ENCODE measurements at regions of chr4 and their contacts with region 1.

Region 1: DNA sequence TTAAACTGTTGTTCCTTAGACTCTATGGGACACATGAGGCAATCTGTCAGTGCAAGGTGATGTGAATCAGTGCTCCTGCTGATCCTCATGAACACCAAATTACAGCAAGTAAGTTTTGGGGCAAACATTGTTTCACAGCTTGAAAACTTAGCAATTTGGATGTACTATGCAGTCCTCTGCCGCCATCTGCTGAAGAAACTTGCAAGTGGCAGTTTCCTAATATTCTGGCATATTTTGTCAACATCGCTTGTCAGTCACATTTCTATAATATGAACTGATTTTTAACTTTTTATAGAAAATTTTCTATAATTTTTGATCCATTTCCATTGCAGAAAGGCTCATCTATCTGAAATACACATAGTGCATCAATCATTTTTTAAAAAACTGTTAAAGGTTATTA is 56.3 kb downstream of the ZAR1 start:
- DNase-seq: no peak
- H3K4me3 ChIP-seq: no peak overlapping the region
- H3K27ac ChIP-seq: no peak overlapping the region
- H3K4me1 ChIP-seq: no peaks in the 10 kb centered on the region
- H3K27me3 ChIP-seq: no peaks in the 10 kb centered on the region
- CTCF ChIP-seq: peak; percentile 76
- EP300 ChIP-seq: no peak
- RAD21 ChIP-seq: peak; percentile 94

Region 2: DNA sequence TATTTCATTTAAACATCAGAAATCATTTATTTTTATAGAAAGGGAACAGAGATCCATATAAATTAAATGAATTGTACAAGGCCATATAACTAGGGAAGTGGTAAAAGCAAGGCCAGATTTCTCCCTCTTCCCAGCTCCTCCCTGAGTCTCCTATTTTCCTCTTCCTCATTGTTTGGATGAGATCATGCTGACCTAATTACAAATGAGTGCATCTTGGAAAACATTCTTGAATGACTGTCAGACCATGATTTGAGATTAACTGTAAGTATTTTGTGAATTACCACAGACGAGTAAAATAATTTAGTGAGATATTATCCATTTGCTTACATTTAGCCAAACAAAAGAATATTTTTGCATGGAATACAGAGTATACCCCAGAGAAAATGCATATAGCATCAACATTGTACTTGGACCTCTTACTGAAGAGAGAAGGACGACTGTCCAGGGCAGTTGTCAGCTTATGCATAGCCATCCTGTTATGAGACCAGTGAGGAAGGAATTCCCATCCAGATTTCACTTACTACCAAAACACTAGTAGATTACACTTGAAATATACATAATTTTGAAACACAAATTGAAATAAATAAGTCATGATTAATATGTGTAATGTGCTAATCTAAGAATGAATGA is 157.7 kb before region 1 on chr4:
- CTCF ChIA-PET with region 1: interaction called, 13 read pairs
- POLR2A ChIA-PET with region 1: no interaction called
- DNase-seq: no peak
- H3K4me3 ChIP-seq: no peak overlapping the region
- H3K27ac ChIP-seq: peak overlapping the region in 1 of 2 experiments; percentile 24; a peak in 1 of 4 replicates
- H3K4me1 ChIP-seq: peaks cover 0 to 13% of the 10 kb centered on the region in 2 experiments; a peak in 2 of 4 replicates
- H3K27me3 ChIP-seq: no peaks in the 10 kb centered on the region
- CTCF ChIP-seq: no peak
- EP300 ChIP-seq: no peak
- RAD21 ChIP-seq: no peak

Region 3: DNA sequence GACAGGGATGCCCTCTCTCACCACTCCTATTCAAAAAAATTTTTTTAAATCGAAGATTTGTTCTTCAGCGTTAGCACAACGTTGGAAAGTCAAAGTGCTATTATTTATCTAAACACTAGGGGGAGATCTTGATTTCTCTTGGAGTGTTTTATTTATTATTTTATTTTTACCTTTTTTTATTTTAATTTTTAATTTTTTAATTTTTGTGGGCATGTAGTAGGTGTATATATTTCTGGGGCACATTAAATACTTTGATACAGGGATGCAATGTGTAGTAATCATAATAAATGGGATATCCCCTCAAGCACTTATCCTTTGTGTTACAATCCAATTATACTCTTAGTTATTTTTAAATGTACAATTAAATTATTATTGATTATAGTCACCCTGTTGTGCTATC is 100.6 kb before region 1 on chr4:
- CTCF ChIA-PET with region 1: interaction called, 50 read pairs
- POLR2A ChIA-PET with region 1: no interaction called
- DNase-seq: no peak
- H3K4me3 ChIP-seq: no peak overlapping the region
- H3K27ac ChIP-seq: no peak overlapping the region
- H3K4me1 ChIP-seq: no peaks in the 10 kb centered on the region
- H3K27me3 ChIP-seq: no peaks in the 10 kb centered on the region
- CTCF ChIP-seq: peak; percentile 62
- EP300 ChIP-seq: no peak
- RAD21 ChIP-seq: peak; percentile 66

Region 4: DNA sequence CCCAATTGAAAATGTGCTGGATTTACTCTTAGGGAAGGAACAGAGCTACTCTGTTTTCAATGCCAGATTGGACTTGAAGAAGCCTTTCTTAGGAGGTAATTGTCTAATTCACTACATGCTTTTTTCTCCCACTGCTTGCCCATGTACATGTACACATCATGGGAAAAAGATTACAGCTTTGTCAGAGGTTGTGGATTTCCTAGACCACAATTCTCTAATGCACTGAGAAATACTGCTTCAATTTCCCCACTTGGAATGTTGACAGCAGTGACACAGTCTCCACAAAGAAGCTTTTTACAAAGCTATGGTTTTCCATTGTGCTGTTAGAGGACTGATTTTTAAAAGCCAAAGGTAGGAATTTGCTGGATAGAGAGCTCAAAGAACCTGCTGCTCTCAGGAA is 36.8 kb before region 1 on chr4:
- CTCF ChIA-PET with region 1: interaction called, 13 read pairs
- POLR2A ChIA-PET with region 1: no interaction called
- DNase-seq: no peak
- H3K4me3 ChIP-seq: no peak overlapping the region
- H3K27ac ChIP-seq: no peak overlapping the region
- H3K4me1 ChIP-seq: no peaks in the 10 kb centered on the region; a peak in 2 of 4 replicates
- H3K27me3 ChIP-seq: no peaks in the 10 kb centered on the region
- CTCF ChIP-seq: no peak
- EP300 ChIP-seq: no peak
- RAD21 ChIP-seq: no peak

Region 5: GRCh38 chr4:48526406-48526805 is 19.9 kb before region 1 on chr4:
- CTCF ChIA-PET with region 1: interaction called, 37 read pairs
- POLR2A ChIA-PET with region 1: no interaction called
- DNase-seq: no peak
- H3K4me3 ChIP-seq: no peak overlapping the region
- H3K27ac ChIP-seq: no peak overlapping the region
- H3K4me1 ChIP-seq: no peaks in the 10 kb centered on the region
- H3K27me3 ChIP-seq: no peaks in the 10 kb centered on the region
- CTCF ChIP-seq: no peak
- EP300 ChIP-seq: no peak
- RAD21 ChIP-seq: no peak